ENCODE measurements at regions of chr2 and their contacts with region 1.

Region 1: DNA sequence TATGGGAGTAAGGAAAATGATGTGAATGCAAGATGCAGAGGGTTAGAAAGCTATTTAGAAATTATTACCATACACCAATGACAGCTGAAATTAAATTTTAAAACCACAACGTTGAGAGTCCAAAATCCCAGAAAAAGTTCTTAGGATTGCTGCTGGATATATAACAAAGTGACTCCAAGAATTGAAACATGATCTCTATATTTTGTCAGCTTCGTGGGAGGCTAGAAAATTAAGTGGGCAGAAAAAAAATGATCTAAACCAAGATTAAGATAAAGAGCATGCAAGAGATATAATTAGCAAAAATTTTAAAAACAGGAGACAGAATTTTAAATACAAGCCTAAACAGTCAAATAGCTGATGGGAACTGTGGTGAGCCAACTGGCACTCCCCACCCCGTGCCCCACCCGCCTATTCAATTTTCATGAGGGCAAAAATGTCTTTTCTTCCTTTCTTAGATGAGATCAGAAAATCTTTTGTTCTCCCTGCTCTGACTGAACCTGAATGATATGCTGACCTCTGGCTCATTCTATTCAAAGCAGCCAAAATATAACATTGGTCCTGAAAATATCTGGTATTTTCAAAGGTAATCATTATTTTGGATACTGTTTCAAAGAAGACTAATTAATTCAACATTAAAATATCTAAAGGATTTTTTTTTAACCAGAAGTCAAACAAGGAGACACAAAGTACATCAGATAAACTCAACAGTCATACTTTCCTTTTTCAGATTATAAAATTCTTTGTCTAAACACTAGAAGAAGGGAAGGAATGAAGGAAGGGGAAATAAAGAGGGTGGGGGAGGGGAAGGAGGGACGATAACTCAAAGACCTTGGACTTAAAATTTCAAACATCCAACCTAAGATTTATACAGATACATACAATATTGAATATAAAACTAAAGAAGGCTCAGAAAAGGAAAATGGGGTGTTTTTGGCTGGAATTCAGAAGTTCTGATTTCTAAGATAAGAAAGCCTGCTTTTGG is 12.2 kb downstream of the KANSL3 start:
- DNase-seq: no peak
- H3K4me3 ChIP-seq: no peak overlapping the region
- H3K27ac ChIP-seq: peak overlapping the region; percentile 41 to 65
- H3K4me1 ChIP-seq: peaks cover 5 to 19% of the 10 kb centered on the region in 2 donors
- H3K27me3 ChIP-seq: no peaks in the 10 kb centered on the region
- CTCF ChIP-seq: no peak

Region 2: DNA sequence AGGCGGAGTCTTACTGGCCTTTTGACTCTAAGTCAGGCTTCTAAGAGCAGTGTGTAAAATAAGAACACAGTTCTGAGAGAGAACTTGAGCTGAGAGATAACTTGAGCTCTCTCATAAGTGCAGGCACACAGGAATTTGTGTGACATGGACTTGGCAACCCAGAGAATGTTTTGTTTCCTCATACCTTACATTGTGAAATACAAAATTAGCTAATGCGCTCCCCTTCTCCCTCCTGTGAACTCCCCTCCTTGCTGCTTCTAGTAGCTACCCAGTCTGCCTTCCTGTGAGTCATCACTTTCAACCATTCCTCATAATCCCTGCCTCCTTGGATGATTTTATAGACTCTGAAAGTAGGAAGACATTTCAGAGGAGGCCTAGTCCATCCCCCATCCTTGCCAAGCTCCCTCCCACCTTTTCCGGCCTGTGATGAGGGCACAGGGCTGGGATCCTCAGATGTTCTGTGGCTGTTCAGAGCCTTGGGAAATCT is 39.3 kb after region 1 on chr2:
- intact Hi-C with region 1: loop called (anchors 5 kb)
- DNase-seq: peak in 1 of 2 donors; percentile 85
- H3K4me3 ChIP-seq: no peak overlapping the region
- H3K27ac ChIP-seq: peak overlapping the region; percentile 87 to 92
- H3K4me1 ChIP-seq: peaks cover 8 to 12% of the 10 kb centered on the region in 2 donors
- H3K27me3 ChIP-seq: no peaks in the 10 kb centered on the region
- CTCF ChIP-seq: no peak

Region 3: DNA sequence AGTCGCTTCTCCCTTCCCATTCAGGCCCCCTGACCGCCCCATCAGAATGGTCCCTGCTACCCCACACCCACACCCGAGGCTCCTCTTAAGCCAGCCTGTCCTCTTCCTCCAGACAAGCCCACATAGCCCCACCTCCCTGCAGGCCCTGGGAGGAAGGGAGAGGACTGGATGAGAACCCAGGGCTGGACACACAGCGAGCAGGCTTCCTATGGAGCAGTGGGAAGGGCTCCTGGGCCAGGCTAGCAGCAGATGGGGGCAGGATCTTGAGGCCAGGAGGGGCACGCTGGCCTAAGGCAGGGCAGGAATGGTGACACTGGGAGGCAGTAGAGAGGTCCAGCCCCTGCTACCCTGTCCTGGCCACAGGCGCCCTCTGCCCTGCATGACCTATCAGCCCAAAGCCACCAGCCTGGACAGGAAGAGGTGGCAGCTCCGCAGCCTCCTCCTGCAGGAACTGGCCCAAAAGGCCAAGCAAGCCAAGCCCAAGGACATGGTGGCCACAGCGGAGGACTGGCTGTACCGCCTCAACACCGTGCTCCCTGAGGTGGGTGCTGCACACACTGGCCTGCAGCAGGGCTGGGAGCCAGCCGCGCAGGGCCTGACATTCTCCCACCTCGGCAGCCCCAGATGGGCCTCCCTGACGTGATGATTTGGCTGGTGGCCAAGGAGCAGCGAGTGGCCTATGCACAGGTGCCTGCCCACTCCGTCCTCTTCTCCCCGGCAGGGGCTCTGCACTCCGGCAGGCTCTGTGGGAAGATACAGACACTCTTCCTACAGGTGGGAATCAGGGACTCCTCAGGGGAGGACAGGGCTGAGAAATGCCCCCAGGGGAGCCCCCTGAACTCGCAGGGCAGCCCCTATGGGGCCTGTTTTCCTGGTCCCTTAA is 60.0 kb after region 1 on chr2:
- intact Hi-C with region 1: no loop called
- DNase-seq: no peak
- H3K4me3 ChIP-seq: no peak overlapping the region
- H3K27ac ChIP-seq: no peak overlapping the region
- H3K4me1 ChIP-seq: no peaks in the 10 kb centered on the region
- H3K27me3 ChIP-seq: no peaks in the 10 kb centered on the region
- CTCF ChIP-seq: no peak